Mammary epithelial cell (primary cell): ENCODE measurements at regions of chr13 and their contacts with region 1.

Region 1: GRCh38 chr13:109256866-109257760 is 529.3 kb downstream of the IRS2 start:
- DNase-seq: peak; percentile 100
- H3K4me3 ChIP-seq: no peak overlapping the region
- H3K27ac ChIP-seq: peak overlapping the region; percentile 99
- H3K4me1 ChIP-seq: peaks cover 57% of the 10 kb centered on the region
- H3K27me3 ChIP-seq: no peaks in the 10 kb centered on the region
- CTCF ChIP-seq: no peak

Region 2: GRCh38 chr13:109156181-109156935 is 100.8 kb before region 1 on chr13:
- CTCF ChIA-PET with region 1: no interaction called
- dilution Hi-C with region 1: loop called (anchors 5 kb)
- in situ Hi-C with region 1: loop called (anchors 5 to 10 kb)
- intact Hi-C with region 1: loop called (anchors 2 kb)
- DNase-seq: peak; percentile 84
- H3K4me3 ChIP-seq: peak overlapping the region; percentile 15 to 33 (median 30)
- H3K27ac ChIP-seq: peak overlapping the region; percentile 98
- H3K4me1 ChIP-seq: peaks cover 69% of the 10 kb centered on the region
- H3K27me3 ChIP-seq: no peaks in the 10 kb centered on the region
- CTCF ChIP-seq: no peak

Region 3: DNA sequence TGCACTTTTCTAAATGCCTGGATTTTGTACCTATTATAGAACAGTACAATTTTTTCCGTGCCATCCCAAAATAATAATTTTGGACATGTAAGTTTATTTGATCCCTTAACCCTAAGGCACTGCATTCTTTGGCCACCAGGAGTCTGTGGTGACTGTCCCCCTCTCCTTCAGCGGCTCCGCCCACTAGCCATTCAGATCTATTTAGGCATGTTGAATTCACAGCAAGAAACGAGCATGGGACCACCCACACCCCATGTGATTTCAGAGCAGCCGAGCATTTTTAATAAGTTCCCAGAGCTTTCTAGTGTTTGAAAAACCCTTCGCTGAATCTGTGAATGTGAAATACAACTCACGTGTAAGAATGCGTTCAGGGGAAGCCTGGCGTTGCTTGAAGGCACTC is 60.2 kb before region 1 on chr13:
- CTCF ChIA-PET with region 1: no interaction called
- dilution Hi-C with region 1: loop called (anchors 5 kb)
- in situ Hi-C with region 1: no loop called
- intact Hi-C with region 1: loop called (anchors 1 kb)
- DNase-seq: no peak
- H3K4me3 ChIP-seq: no peak overlapping the region
- H3K27ac ChIP-seq: no peak overlapping the region
- H3K4me1 ChIP-seq: peaks cover 9% of the 10 kb centered on the region
- H3K27me3 ChIP-seq: no peaks in the 10 kb centered on the region
- CTCF ChIP-seq: peak in 1 of 2 donors; percentile 2

Region 4: GRCh38 chr13:109297628-109298027 is 40.5 kb after region 1 on chr13:
- CTCF ChIA-PET with region 1: no interaction called
- dilution Hi-C with region 1: no loop called
- in situ Hi-C with region 1: no loop called
- intact Hi-C with region 1: loop called (anchors 1 kb)
- DNase-seq: peak; percentile 77
- H3K4me3 ChIP-seq: no peak overlapping the region
- H3K27ac ChIP-seq: no peak overlapping the region
- H3K4me1 ChIP-seq: no peaks in the 10 kb centered on the region
- H3K27me3 ChIP-seq: no peaks in the 10 kb centered on the region
- CTCF ChIP-seq: no peak

Region 5: DNA sequence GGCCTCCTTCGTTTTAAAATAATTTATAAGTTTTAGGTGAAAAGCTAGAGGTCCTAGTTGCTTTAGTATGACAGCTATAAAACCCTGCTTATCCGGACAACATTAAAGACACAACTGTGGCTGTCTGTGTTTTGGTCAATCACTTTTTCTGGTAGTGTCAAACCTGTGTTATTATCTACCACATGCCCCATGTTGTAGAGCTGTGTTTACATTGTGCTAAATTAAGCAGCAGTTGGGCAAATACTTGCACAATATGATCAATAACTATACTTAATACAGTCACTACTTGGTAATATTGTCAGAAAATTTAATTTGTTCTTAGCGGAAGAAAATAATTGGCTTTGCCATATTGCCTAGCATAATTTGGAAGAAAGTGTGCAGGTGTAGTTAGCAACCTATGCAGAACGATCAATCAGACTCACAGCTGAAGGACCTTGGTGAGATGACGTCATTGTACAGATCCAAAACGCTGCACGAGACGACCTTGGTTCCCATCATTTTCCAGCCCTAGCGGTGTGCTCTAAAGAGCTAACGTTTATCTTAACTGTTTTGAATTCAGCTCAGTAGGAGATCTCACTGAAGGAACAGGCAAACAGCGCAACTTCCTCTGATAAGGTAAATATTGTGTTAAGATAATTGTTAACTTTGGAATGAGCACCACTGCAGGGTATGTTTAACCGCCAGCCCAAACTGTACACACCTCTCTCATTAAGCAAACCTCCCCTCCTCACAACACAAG is 52.7 kb after region 1 on chr13:
- CTCF ChIA-PET with region 1: no interaction called
- dilution Hi-C with region 1: no loop called
- in situ Hi-C with region 1: no loop called
- intact Hi-C with region 1: no loop called
- DNase-seq: no peak
- H3K4me3 ChIP-seq: no peak overlapping the region
- H3K27ac ChIP-seq: no peak overlapping the region
- H3K4me1 ChIP-seq: no peaks in the 10 kb centered on the region
- H3K27me3 ChIP-seq: no peaks in the 10 kb centered on the region
- CTCF ChIP-seq: no peak

Region 6: GRCh38 chr13:109436055-109436622 is 179.0 kb after region 1 on chr13:
- CTCF ChIA-PET with region 1: no interaction called
- dilution Hi-C with region 1: no loop called
- in situ Hi-C with region 1: no loop called
- intact Hi-C with region 1: loop called (anchors 5 kb)
- DNase-seq: peak; percentile 98
- H3K4me3 ChIP-seq: peak overlapping the region in 1 of 3 experiments; percentile 7
- H3K27ac ChIP-seq: peak overlapping the region; percentile 65
- H3K4me1 ChIP-seq: peaks cover 26% of the 10 kb centered on the region
- H3K27me3 ChIP-seq: no peaks in the 10 kb centered on the region
- CTCF ChIP-seq: no peak

Region 7: GRCh38 chr13:110006304-110006703 is 749.2 kb after region 1 on chr13:
- CTCF ChIA-PET with region 1: no interaction called
- dilution Hi-C with region 1: loop called (anchors 5 kb)
- in situ Hi-C with region 1: no loop called
- intact Hi-C with region 1: no loop called
- DNase-seq: peak; percentile 93
- H3K4me3 ChIP-seq: no peak overlapping the region
- H3K27ac ChIP-seq: peak overlapping the region; percentile 93
- H3K4me1 ChIP-seq: peaks cover 51% of the 10 kb centered on the region
- H3K27me3 ChIP-seq: no peaks in the 10 kb centered on the region
- CTCF ChIP-seq: no peak

Region 8: DNA sequence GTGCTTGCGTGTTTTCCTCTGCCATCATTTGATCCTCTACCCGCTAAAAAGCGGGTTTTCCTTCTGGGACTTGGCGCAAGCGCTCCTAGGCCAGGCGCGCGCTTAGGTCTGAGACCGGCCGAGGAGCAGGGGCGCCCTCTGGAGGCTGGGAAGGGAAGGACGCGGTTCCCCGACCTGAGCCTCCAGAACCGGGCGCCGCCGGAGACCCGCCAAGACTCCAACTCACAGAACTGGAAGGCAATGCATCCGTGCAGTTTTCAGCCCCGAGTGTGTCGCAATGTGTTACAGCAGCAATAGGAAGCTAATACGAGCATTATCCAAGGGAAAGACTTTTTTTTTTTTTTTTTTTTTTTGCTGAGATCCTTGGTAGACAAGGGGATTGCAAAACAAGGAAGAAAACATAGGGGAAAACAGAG is 859.0 kb after region 1 on chr13:
- CTCF ChIA-PET with region 1: interaction called, 3 read pairs
- dilution Hi-C with region 1: no loop called
- in situ Hi-C with region 1: loop called in 1 of 2 experiments (anchors 25 kb)
- intact Hi-C with region 1: no loop called
- DNase-seq: no peak
- H3K4me3 ChIP-seq: no peak overlapping the region
- H3K27ac ChIP-seq: no peak overlapping the region
- H3K4me1 ChIP-seq: peaks cover 34% of the 10 kb centered on the region
- H3K27me3 ChIP-seq: no peaks in the 10 kb centered on the region
- CTCF ChIP-seq: peak; percentile 26 to 60